Breast epithelium (tissue), 4 donors: ENCODE measurements at regions of chr13 and their contacts with region 1.

Region 1: GRCh38 chr13:25420161-25420560 is 48.4 kb downstream of the ATP8A2 start:
- DNase-seq: no peak
- H3K4me3 ChIP-seq: no peak overlapping the region
- H3K27ac ChIP-seq: no peak overlapping the region
- H3K4me1 ChIP-seq: no peaks in the 10 kb centered on the region
- H3K27me3 ChIP-seq: peaks cover 0 to 10% of the 10 kb centered on the region in 2 donors
- CTCF ChIP-seq: no peak
- POLR2A ChIP-seq: no peak

Region 2: GRCh38 chr13:24713022-24713421 is 707.1 kb before region 1 on chr13:
- intact Hi-C with region 1: loop called (anchors 5 kb)
- DNase-seq: no peak
- H3K4me3 ChIP-seq: no peak overlapping the region
- H3K27ac ChIP-seq: no peak overlapping the region
- H3K4me1 ChIP-seq: no peaks in the 10 kb centered on the region
- H3K27me3 ChIP-seq: no peaks in the 10 kb centered on the region
- CTCF ChIP-seq: no peak
- POLR2A ChIP-seq: no peak

Region 3: GRCh38 chr13:27259831-27260230 is 1839.7 kb after region 1 on chr13:
- intact Hi-C with region 1: no loop called
- DNase-seq: no peak
- H3K4me3 ChIP-seq: no peak overlapping the region
- H3K27ac ChIP-seq: peak overlapping the region in 1 of 2 donors; percentile 38
- H3K4me1 ChIP-seq: peaks cover 0 to 11% of the 10 kb centered on the region in 2 donors
- H3K27me3 ChIP-seq: no peaks in the 10 kb centered on the region
- CTCF ChIP-seq: no peak
- POLR2A ChIP-seq: no peak